ENCODE measurements at regions of chr1 and their contacts with region 1.

Region 1: DNA sequence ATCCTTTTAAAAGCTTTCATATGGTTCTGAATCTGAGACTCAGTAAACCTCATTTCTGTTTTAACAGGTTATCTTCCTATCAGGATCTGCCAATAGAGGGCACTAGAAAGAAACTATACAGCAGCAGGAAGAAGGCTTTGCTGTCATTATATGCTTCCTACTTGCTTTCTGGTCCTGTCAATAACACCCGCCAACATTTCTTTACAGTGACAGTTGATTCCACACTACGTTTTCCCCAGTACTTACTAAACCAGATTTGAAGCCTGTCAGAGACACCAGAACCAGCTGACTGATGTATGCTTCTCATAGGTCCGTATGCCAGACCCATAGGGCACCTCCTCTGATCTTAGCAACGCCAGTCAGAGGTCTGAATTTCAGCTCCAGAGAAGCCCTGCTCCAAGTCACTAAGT is 341.0 kb upstream of the NEGR1 start:
- DNase-seq: no peak
- H3K4me3 Mint-ChIP-seq: no peak overlapping the region
- H3K27ac Mint-ChIP-seq: no peak overlapping the region
- H3K4me1 Mint-ChIP-seq: no peaks in the 10 kb centered on the region
- H3K27me3 Mint-ChIP-seq: no peaks in the 10 kb centered on the region

Region 2: DNA sequence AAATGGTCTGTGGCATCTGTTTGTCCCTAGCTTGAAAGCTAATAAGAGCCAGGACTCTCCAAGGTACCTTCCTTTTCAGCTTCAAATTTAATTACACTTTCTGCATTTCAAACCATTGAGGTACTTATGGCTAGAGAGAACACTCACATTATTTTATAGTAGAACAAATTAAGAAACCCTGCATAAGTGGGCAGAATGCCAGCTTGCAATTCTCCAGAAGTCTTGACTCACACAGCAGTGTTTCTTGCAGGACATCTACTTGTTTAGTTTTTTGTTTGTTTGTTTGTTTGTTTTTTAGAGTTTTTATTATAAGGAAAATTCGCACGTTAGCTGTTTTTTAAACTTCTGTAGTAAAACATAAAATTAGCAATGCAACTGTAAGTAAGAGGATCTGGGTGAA is 738.1 kb before region 1 on chr1:
- CTCF ChIA-PET with region 1: no interaction called
- POLR2A ChIA-PET with region 1: no interaction called
- intact Hi-C with region 1: no loop called
- DNase-seq: no peak
- H3K4me3 Mint-ChIP-seq: no peak overlapping the region
- H3K27ac Mint-ChIP-seq: no peak overlapping the region
- H3K4me1 Mint-ChIP-seq: no peaks in the 10 kb centered on the region
- H3K27me3 Mint-ChIP-seq: no peaks in the 10 kb centered on the region

Region 3: DNA sequence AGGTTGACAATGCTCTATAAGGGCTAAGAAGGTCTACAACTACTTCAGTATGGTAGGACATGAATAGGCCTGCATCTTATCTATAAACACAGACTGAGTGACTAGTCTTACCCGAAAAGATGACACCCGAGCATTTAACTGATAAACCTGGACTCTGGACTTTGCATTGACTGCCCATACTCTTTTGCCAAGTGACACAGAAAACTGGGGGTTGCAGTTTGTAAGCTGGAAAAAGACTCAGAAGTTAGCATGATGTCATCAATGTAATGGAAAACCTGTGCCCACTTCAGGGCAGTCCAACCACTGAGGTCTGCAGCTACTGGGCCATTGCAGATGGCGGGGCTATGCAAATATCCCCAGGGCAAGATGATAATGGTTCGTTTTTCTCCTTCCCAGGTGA is 82.6 kb before region 1 on chr1:
- CTCF ChIA-PET with region 1: no interaction called
- POLR2A ChIA-PET with region 1: no interaction called
- intact Hi-C with region 1: no loop called
- DNase-seq: no peak
- H3K4me3 Mint-ChIP-seq: no peak overlapping the region
- H3K27ac Mint-ChIP-seq: no peak overlapping the region
- H3K4me1 Mint-ChIP-seq: no peaks in the 10 kb centered on the region
- H3K27me3 Mint-ChIP-seq: no peaks in the 10 kb centered on the region

Region 4: GRCh38 chr1:73998348-73998959 is 1375.2 kb after region 1 on chr1:
- CTCF ChIA-PET with region 1: no interaction called
- POLR2A ChIA-PET with region 1: no interaction called
- intact Hi-C with region 1: loop called (anchors 5 kb)
- DNase-seq: no peak
- H3K4me3 Mint-ChIP-seq: no peak overlapping the region
- H3K27ac Mint-ChIP-seq: no peak overlapping the region
- H3K4me1 Mint-ChIP-seq: no peaks in the 10 kb centered on the region
- H3K27me3 Mint-ChIP-seq: no peaks in the 10 kb centered on the region

Measured in activated CD4-positive, alpha-beta memory T cell treated with anti-CD3 and anti-CD28 coated beads for 36 hours (primary cell).